ENCODE measurements at regions of chr3 and their contacts with region 1.

Region 1: DNA sequence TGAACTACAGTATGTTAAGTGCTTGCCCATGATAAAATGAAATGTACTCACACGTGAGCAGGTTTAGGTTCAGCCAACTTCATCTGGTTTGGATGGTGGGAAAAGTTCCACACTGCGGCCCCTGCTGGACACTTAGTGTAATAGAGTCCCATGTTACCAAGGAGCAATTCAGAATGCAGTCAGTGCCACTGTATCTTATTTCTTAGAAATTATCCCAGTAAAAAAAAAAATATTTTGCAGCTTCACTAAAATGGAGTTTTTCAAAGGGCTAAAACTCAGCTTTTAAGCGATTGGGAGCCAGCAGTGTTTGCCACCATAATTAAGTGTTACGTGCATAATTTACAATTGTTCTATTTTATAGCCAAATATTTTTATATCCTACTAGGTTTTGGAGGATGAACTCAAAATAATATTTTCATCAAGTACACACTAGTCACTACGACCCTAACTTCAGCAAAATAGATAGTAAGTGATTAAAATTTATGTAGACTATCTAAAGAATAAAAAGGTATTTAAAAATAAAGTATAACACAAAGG is 371.7 kb upstream of the GBE1 start:
- DNase-seq: peak; percentile 60
- H3K4me3 Mint-ChIP-seq: no peak overlapping the region
- H3K27ac Mint-ChIP-seq: no peak overlapping the region
- H3K4me1 Mint-ChIP-seq: no peaks in the 10 kb centered on the region
- H3K27me3 Mint-ChIP-seq: peaks cover 11% of the 10 kb centered on the region

Region 2: DNA sequence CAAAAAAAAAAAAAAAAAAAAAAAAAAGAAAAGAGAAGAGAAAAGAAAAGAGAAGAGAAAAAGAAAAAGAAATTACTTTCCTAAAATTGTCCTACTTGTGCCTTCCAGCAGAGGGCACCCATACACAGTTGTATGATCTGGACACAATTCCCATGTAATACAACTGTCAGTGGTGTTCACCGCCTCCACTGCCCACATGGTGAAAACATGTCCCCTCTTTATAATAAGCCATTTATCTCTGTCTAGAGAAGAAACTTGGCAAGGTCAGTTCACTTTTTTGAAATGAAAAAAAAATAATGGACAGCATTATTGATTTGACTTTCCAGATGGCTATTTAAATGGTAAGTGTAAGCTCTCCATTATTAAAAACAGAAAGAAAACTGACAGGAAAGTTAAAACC is 831.1 kb before region 1 on chr3:
- CTCF ChIA-PET with region 1: no interaction called
- intact Hi-C with region 1: loop called (anchors 5 kb)
- DNase-seq: peak; percentile 26
- H3K4me3 Mint-ChIP-seq: no peak overlapping the region
- H3K27ac Mint-ChIP-seq: no peak overlapping the region
- H3K4me1 Mint-ChIP-seq: no peaks in the 10 kb centered on the region
- H3K27me3 Mint-ChIP-seq: no peaks in the 10 kb centered on the region

Region 3: DNA sequence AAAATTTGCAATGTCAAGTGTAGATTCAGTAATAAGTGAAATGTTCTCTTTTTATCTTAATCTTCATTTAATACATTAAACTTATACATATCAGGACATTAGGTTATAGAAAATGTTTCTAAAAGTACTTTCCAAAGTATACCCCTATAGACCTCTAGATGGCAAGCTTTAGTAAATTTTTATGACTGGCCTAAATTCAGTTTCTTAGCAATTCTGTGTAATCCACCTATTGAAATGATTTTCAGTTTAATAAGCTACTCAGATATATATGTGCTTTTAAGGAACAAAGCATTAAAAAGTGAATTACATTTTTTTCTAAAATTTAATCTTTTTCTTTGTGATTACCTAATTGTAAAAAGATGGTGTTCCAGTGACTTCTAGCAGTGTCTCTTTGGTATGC is 713.9 kb before region 1 on chr3:
- CTCF ChIA-PET with region 1: interaction called, 3 read pairs
- intact Hi-C with region 1: loop called (anchors 2 kb)
- DNase-seq: no peak
- H3K4me3 Mint-ChIP-seq: no peak overlapping the region
- H3K27ac Mint-ChIP-seq: no peak overlapping the region
- H3K4me1 Mint-ChIP-seq: no peaks in the 10 kb centered on the region
- H3K27me3 Mint-ChIP-seq: no peaks in the 10 kb centered on the region

Region 4: DNA sequence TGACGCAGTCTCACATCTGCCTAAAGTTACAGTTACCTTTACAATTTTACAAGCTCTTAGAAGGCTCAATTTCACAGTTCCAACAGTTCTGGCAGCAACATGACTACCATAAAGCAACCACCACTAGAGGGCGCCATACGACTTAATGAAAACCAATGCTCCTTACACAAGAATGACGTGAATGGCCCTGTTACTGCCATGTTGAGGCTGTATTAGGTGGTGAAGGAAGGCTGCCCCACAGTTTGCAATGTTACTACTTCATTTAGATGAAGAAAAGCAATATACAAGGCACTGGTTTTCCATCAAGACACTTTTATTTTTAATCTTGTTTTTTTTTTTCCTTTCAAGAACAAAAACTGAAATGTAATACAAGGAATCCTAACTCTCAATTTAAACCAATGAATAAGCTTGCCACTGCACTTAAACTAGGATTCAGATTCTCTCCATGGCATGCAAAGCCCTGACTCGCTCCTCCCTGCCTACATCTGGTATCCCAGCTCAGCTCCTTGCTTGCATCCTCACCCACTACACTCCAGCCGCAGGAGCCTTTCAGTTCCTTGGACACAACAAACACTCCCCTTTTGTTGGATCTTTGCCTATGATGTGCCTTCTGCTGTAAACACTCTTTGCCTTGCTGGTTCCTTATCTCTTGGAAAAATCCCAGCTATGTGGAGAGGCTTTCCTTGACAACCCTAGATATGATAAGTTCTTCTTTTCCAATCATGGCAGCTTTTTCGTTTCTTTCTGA is 642.4 kb before region 1 on chr3:
- CTCF ChIA-PET with region 1: interaction called, 5 read pairs
- intact Hi-C with region 1: loop called (anchors 1 kb)
- DNase-seq: peak; percentile 89
- H3K4me3 Mint-ChIP-seq: no peak overlapping the region
- H3K27ac Mint-ChIP-seq: no peak overlapping the region
- H3K4me1 Mint-ChIP-seq: no peaks in the 10 kb centered on the region
- H3K27me3 Mint-ChIP-seq: no peaks in the 10 kb centered on the region

Region 5: GRCh38 chr3:81581966-81582599 is 551.1 kb before region 1 on chr3:
- CTCF ChIA-PET with region 1: no interaction called
- intact Hi-C with region 1: loop called (anchors 1 kb)
- DNase-seq: peak; percentile 46
- H3K4me3 Mint-ChIP-seq: no peak overlapping the region
- H3K27ac Mint-ChIP-seq: no peak overlapping the region
- H3K4me1 Mint-ChIP-seq: no peaks in the 10 kb centered on the region
- H3K27me3 Mint-ChIP-seq: no peaks in the 10 kb centered on the region

Region 6: GRCh38 chr3:81666493-81667121 is 466.5 kb before region 1 on chr3:
- CTCF ChIA-PET with region 1: no interaction called
- intact Hi-C with region 1: loop called (anchors 1 kb)
- DNase-seq: no peak
- H3K4me3 Mint-ChIP-seq: no peak overlapping the region
- H3K27ac Mint-ChIP-seq: no peak overlapping the region
- H3K4me1 Mint-ChIP-seq: no peaks in the 10 kb centered on the region
- H3K27me3 Mint-ChIP-seq: no peaks in the 10 kb centered on the region

Region 7: DNA sequence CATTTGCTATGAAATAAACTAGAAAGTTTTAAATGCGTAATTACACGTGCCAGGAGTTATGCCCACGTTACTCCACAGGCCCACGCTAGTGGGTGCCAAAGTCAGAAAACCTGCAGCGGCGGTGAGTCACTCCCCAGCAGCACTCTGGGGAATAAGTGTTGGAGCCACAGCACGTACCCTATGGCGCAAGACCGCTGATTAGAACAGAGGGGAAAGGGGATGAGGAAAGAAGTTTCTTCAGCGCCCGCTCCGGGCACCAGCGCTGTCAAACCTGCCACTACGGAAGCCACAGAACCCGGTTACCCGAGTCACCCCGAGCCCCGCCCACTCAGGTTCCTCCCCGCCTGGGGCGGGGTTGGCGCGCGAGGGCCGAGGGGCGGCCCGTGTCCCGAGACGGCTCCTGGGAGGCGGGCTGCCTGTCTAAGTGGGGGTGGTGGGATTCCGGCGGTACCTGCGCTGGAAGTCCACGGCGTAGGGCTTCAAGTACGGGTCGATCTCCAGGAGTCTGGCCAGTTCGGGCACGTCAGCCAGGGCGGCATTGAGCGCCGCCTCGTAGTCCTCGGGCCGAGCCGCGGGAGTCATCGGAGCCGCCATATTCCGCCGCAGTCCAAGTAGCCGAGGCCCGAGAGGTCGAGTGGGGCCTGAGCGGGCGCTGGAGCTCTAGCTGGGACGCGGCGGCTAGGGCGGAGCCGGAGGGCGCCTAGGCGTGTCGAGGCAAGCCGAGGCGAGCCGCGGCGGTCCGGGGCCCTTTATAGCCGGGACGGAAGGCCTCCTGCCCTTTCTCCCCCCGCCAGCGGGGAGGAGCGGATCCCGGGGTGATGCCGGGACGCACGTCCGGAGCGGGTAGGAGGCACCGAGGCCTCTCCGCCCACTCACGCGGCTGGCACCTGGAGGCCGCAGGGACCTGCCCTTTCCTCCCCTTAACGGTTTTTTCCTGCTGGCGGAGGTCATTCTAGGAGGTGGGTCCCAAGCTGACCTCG is 371.9 kb before region 1 on chr3 and contains the start of gene GBE1:
- CTCF ChIA-PET with region 1: no interaction called
- intact Hi-C with region 1: loop called (anchors 1 kb)
- DNase-seq: peak; percentile 87
- H3K4me3 Mint-ChIP-seq: peak within 1 kb of the TSS; percentile 90
- H3K27ac Mint-ChIP-seq: peak within 1 kb of the TSS; percentile 97
- H3K4me1 Mint-ChIP-seq: peaks cover 14% of the 10 kb centered on the region
- H3K27me3 Mint-ChIP-seq: no peaks in the 10 kb centered on the region
- total RNA-seq, gene GBE1: 24.6 to 26.0 TPM

Region 8: DNA sequence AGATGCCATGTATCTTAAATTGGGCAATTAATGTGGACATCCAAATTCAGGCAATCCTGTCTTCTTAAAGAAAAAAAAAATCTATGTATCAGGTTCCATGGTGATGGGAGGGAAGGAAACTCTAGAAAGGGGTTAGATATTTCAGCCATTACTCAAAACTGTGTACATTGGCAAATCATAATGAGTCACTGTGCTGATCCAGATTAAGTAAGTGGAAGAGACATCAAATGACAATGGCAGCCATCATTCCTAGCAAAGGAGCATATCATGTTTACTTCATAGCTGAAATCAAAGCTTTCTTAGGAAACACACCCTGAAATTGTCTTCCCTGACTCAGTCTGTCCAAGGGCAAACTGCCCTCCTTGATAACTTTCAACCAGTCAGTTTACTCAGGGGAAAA is 341.6 kb after region 1 on chr3:
- CTCF ChIA-PET with region 1: no interaction called
- intact Hi-C with region 1: no loop called
- DNase-seq: no peak
- H3K4me3 Mint-ChIP-seq: no peak overlapping the region
- H3K27ac Mint-ChIP-seq: no peak overlapping the region
- H3K4me1 Mint-ChIP-seq: no peaks in the 10 kb centered on the region
- H3K27me3 Mint-ChIP-seq: no peaks in the 10 kb centered on the region